Gastrocnemius medialis (tissue), 4 donors: ENCODE measurements at regions of chr19 and their contacts with region 1.

Region 1: GRCh38 chr19:43503501-43504425 is 783 bp downstream of the PHLDB3 start:
- DNase-seq: peak; percentile 92 to 95
- ATAC-seq: peak; percentile 95 to 96
- H3K4me3 ChIP-seq: peak overlapping the region; percentile 74 to 92 (median 88)
- H3K27ac ChIP-seq: peak overlapping the region; percentile 77 to 89 (median 84)
- H3K4me1 ChIP-seq: peaks cover 12% of the 10 kb centered on the region in 2 donors
- H3K27me3 ChIP-seq: no peaks in the 10 kb centered on the region
- CTCF ChIP-seq: no peak
- POLR2A ChIP-seq: peak; percentile 29 to 51

Region 2: GRCh38 chr19:43463381-43464136 is 40.2 kb before region 1 on chr19:
- in situ Hi-C with region 1: no loop called
- intact Hi-C with region 1: loop called (anchors 1 kb)
- DNase-seq: peak; percentile 85 to 90
- ATAC-seq: peak; percentile 91 to 95
- H3K4me3 ChIP-seq: peak overlapping the region; percentile 64 to 94 (median 68)
- H3K27ac ChIP-seq: peak overlapping the region; percentile 67 to 80 (median 70)
- H3K4me1 ChIP-seq: no peaks in the 10 kb centered on the region
- H3K27me3 ChIP-seq: peaks cover 12 to 35% (median 18%) of the 10 kb centered on the region in 3 donors
- CTCF ChIP-seq: no peak
- POLR2A ChIP-seq: peak in 1 of 2 donors; percentile 36

Region 3: DNA sequence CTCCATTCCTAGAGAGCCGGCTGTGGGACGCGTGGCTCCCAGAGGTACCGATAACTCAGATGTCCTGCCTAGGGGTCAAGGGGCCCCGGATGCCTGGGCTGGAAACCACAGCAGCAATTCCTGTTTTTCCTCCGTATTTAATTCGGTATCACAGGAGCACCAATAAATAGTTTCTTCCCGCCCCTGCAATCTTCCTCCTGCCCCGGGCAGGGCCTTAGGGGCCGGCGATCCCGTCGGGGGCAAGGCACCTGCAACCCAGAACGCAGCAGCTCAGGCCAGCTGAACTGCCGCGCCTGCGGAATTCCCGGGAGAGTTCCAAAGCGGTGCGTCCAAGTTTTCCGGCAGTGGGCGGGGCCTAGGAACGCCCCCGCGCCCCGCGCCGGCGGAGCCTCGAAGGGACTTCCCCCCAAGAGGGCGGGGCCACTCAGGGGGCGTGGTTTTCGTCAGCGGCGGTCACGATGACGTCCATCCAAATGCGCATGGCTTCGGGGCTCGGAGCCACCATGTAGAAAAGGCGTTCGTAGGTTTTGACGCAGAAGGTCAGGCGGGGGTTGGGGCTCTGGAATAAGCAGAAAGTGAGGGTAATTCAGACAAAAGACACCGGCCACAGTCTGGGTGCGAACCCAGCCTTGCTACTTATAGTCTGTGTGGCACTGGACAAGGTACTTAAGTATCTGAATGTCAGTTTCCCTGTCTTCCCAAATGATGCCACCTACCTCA is 28.6 kb before region 1 on chr19:
- in situ Hi-C with region 1: no loop called
- intact Hi-C with region 1: loop called (anchors 2 kb)
- DNase-seq: peak; percentile 75 to 84
- ATAC-seq: peak; percentile 92 to 97
- H3K4me3 ChIP-seq: peak overlapping the region; percentile 35 to 57 (median 48)
- H3K27ac ChIP-seq: peak overlapping the region; percentile 66 to 79 (median 72)
- H3K4me1 ChIP-seq: peaks cover 0 to 8% of the 10 kb centered on the region in 2 donors
- H3K27me3 ChIP-seq: no peaks in the 10 kb centered on the region
- CTCF ChIP-seq: no peak
- POLR2A ChIP-seq: peak; percentile 26 to 50

Region 4: GRCh38 chr19:43526884-43527859 is 23.4 kb after region 1 on chr19 and contains the start of gene ETHE1:
- in situ Hi-C with region 1: no loop called
- intact Hi-C with region 1: loop called (anchors 2 kb)
- DNase-seq: peak; percentile 61 to 75
- ATAC-seq: peak; percentile 86 to 88
- H3K4me3 ChIP-seq: peak within 1 kb of the TSS; percentile 67 to 95 (median 81)
- H3K27ac ChIP-seq: peak within 1 kb of the TSS; percentile 80 to 87 (median 84)
- H3K4me1 ChIP-seq: peaks cover 24 to 31% of the 10 kb centered on the region in 2 donors
- H3K27me3 ChIP-seq: no peaks in the 10 kb centered on the region
- CTCF ChIP-seq: no peak
- POLR2A ChIP-seq: peak; percentile 56 to 62
- total RNA-seq, gene ETHE1: 18.6 to 34.8 (median 29.2) TPM